ENCODE measurements at regions of chr2 and their contacts with region 1.

Region 1: GRCh38 chr2:202033321-202034248 is at the start of gene FZD7:
- DNase-seq: peak; percentile 83
- H3K4me3 Mint-ChIP-seq: peak within 1 kb of the TSS; percentile 89
- H3K27ac Mint-ChIP-seq: peak within 1 kb of the TSS; percentile 63
- H3K4me1 Mint-ChIP-seq: peaks cover 12% of the 10 kb centered on the region
- H3K27me3 Mint-ChIP-seq: peaks cover 44% of the 10 kb centered on the region
- total RNA-seq, gene FZD7: 1.2 and 1.5 TPM in 2 replicates

Region 2: GRCh38 chr2:200963124-200963917 is 1070.3 kb before region 1 on chr2 and contains the start of gene ORC2:
- intact Hi-C with region 1: loop called (anchors 2 kb)
- DNase-seq: peak; percentile 93
- H3K4me3 Mint-ChIP-seq: peak within 1 kb of the TSS; percentile 97
- H3K27ac Mint-ChIP-seq: peak within 1 kb of the TSS; percentile 93
- H3K4me1 Mint-ChIP-seq: peaks cover 58% of the 10 kb centered on the region
- H3K27me3 Mint-ChIP-seq: no peaks in the 10 kb centered on the region
- total RNA-seq, gene ORC2: 63.1 and 63.3 TPM in 2 replicates

Region 3: DNA sequence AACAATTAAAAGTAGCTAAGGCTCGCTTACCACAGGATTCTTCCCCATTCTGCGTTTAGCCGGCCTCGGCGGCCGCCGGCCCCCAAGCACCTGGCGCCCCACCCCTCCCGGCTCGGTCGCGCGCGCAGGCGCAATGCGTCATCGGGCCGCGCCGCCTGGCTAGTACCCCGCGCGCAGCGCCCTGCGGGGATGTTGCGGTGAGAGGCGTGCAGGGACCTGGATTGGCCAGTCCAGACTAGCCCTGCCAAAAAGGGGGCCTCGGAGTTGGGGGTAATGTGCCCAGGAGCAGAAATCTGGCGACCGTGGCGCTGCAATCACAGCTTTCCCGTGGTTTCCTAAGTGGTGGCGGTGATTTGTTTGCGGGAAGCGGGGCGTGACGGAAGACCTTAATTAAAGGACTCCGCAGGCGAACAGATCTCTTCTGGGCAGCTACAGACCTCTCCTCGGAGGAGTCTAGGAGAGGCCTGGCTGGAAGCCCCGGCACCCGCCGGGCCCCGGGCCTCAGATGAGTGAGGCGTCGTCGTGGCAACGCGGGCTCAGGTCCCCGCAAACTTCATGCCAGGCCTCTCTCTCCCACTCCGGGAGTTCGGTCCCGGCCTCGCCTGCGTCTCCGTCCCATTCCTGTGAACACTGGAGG is 390.9 kb before region 1 on chr2:
- intact Hi-C with region 1: loop called (anchors 2 kb)
- DNase-seq: peak; percentile 84
- H3K4me3 Mint-ChIP-seq: peak overlapping the region; percentile 89
- H3K27ac Mint-ChIP-seq: peak overlapping the region; percentile 92
- H3K4me1 Mint-ChIP-seq: peaks cover 18% of the 10 kb centered on the region
- H3K27me3 Mint-ChIP-seq: peaks cover 3% of the 10 kb centered on the region

Region 4: GRCh38 chr2:201860636-201861066 is 172.9 kb before region 1 on chr2:
- intact Hi-C with region 1: loop called (anchors 2 kb)
- DNase-seq: peak; percentile 10
- H3K4me3 Mint-ChIP-seq: no peak overlapping the region
- H3K27ac Mint-ChIP-seq: no peak overlapping the region
- H3K4me1 Mint-ChIP-seq: peaks cover 18% of the 10 kb centered on the region
- H3K27me3 Mint-ChIP-seq: peaks cover 37% of the 10 kb centered on the region

Region 5: GRCh38 chr2:202178342-202178958 is 144.9 kb after region 1 on chr2:
- intact Hi-C with region 1: loop called (anchors 2 kb)
- DNase-seq: peak; percentile 31
- H3K4me3 Mint-ChIP-seq: no peak overlapping the region
- H3K27ac Mint-ChIP-seq: no peak overlapping the region
- H3K4me1 Mint-ChIP-seq: peaks cover 12% of the 10 kb centered on the region
- H3K27me3 Mint-ChIP-seq: peaks cover 4% of the 10 kb centered on the region

Region 6: GRCh38 chr2:202238234-202239197 is 204.9 kb after region 1 on chr2 and contains the start of gene SUMO1:
- intact Hi-C with region 1: loop called (anchors 2 kb)
- DNase-seq: peak; percentile 89
- H3K4me3 Mint-ChIP-seq: peak within 1 kb of the TSS; percentile 98
- H3K27ac Mint-ChIP-seq: peak within 1 kb of the TSS; percentile 93
- H3K4me1 Mint-ChIP-seq: peaks cover 26% of the 10 kb centered on the region
- H3K27me3 Mint-ChIP-seq: peaks cover 4% of the 10 kb centered on the region
- total RNA-seq, gene SUMO1: 126 and 127 TPM in 2 replicates

Region 7: DNA sequence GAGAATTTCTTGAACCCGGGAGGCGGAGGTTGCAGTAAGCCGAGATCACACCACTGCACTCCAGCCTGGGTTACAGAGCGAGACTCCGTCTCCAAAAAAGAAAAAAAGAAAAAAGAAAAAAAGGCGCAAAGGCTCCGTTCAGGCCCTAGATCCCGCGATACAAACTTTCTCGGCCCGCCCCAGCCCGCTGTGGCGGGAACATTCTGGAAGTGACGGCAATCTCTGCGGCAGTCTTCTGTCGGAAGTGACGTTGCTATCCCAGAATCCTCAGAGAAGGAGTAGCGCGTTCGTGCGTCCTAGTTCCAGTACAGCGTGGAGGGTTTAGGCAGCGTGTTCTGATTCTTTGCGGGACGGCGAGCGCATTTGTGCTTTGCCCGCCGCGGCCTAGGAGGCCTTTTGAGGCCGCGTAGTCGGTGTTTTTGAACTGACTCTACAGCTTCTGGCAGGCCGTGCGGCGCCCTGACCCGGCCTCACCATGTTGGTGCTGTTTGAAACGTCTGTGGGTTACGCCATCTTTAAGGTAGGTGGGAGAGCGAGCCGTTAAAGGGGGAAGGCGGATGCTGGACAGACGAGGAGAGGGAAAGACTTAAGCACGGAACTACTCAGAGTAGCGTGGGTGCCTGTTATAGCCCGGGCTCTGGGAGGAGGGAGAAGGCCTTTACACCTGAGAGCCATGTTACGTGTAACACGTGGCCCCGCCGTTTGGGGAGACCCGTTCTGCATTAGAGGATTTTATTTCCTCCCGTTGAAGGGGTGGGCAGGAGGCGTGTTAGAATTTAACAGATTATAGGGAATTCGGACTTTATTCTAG is 232.1 kb after region 1 on chr2 and contains the start of gene NOP58:
- intact Hi-C with region 1: loop called (anchors 2 kb)
- DNase-seq: peak; percentile 91
- H3K4me3 Mint-ChIP-seq: peak within 1 kb of the TSS; percentile 55
- H3K27ac Mint-ChIP-seq: peak within 1 kb of the TSS; percentile 45
- H3K4me1 Mint-ChIP-seq: peaks cover 19% of the 10 kb centered on the region
- H3K27me3 Mint-ChIP-seq: no peaks in the 10 kb centered on the region
- total RNA-seq, gene NOP58: 227 and 241 TPM in 2 replicates

Measured in activated T-helper 1 cell treated with anti-CD3 and anti-CD28 coated beads, Interleukin-12 subunit alpha, Interleukin-12 subunit beta, Interleukin-2, Interleukin-4 antibody, amounts not matched to agents 30 ng/mL and 10 ng/mL and 1 ng/mL, durations not matched to agents 14 hours and 24 hours and 36 hours (primary cell).